Caco-2 (cell line): ENCODE measurements at regions of chr19 and their contacts with region 1.

Region 1: GRCh38 chr19:37906869-37907734 is at the start of gene SIPA1L3:
- DNase-seq: peak; percentile 99
- H3K4me3 ChIP-seq: peak within 1 kb of the TSS; percentile 77
- H3K4me3 Mint-ChIP-seq: peak within 1 kb of the TSS; percentile 84
- H3K27ac Mint-ChIP-seq: peak within 1 kb of the TSS; percentile 88
- H3K4me1 ChIP-seq: peaks cover 20% of the 10 kb centered on the region
- H3K4me1 Mint-ChIP-seq: peaks cover 23% of the 10 kb centered on the region
- H3K27me3 ChIP-seq: no peaks in the 10 kb centered on the region
- H3K27me3 Mint-ChIP-seq: no peaks in the 10 kb centered on the region
- CTCF ChIP-seq: no peak
- total RNA-seq, gene SIPA1L3: 125 and 129 TPM in 2 replicates

Region 2: DNA sequence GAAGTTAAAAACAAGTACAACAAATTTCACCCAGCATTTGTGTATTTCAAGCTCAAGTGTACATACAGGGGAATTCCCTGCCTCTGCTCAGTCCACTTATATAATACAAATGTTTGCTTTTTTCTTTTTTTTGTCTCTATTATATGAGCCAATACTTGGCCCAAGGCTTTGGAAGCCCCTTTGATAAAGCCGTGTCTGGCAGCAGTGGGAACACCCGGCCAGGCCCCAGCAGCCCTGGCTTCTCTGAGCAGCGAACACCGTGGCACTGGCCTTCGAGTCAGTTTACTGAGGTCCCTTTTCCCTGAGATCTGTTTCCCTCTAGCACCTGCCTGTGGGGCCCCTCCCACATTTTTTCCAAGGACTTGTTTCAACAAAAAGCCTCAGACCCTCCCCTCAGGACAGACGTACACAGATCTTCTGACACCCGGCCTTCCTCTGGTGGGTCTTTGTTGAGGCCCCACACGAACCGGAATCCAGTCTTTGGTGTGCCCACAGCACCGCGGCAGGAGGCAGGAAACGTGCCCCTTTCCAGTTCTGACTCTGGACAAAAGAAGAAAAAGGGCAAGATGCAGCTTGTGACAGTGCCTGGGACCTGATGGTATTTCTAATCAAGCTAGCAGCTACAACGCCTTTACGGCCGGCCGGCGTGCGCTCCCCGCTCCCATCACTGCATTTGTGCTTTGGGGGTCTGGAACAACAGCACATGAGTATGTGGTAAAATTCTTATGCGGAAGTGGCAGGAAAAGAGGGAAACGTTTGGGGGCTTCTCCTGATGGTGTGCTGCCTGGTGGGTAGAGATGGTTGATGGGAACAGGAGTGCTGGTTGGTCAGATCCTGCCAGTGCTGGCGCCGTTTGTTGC is 13.7 kb after region 1 on chr19:
- CTCF ChIA-PET with region 1: interaction called, 7 read pairs
- POLR2A ChIA-PET with region 1: interaction called, 10 read pairs
- intact Hi-C with region 1: loop called (anchors 1 kb)
- DNase-seq: peak; percentile 52 to 63
- H3K4me3 ChIP-seq: no peak overlapping the region
- H3K4me3 Mint-ChIP-seq: peak overlapping the region; percentile 13
- H3K27ac Mint-ChIP-seq: peak overlapping the region; percentile 93
- H3K4me1 ChIP-seq: peaks cover 11% of the 10 kb centered on the region
- H3K4me1 Mint-ChIP-seq: peaks cover 24% of the 10 kb centered on the region
- H3K27me3 ChIP-seq: no peaks in the 10 kb centered on the region
- H3K27me3 Mint-ChIP-seq: no peaks in the 10 kb centered on the region
- CTCF ChIP-seq: no peak

Region 3: GRCh38 chr19:37941782-37942515 is 34.8 kb after region 1 on chr19:
- CTCF ChIA-PET with region 1: interaction called, 10 read pairs
- POLR2A ChIA-PET with region 1: interaction called, 21 read pairs
- intact Hi-C with region 1: loop called (anchors 1 kb)
- DNase-seq: peak; percentile 91 to 94
- H3K4me3 ChIP-seq: no peak overlapping the region
- H3K4me3 Mint-ChIP-seq: peak overlapping the region; percentile 68
- H3K27ac Mint-ChIP-seq: peak overlapping the region; percentile 94
- H3K4me1 ChIP-seq: peaks cover 68% of the 10 kb centered on the region
- H3K4me1 Mint-ChIP-seq: peaks cover 51% of the 10 kb centered on the region
- H3K27me3 ChIP-seq: no peaks in the 10 kb centered on the region
- H3K27me3 Mint-ChIP-seq: no peaks in the 10 kb centered on the region
- CTCF ChIP-seq: no peak

Region 4: GRCh38 chr19:38072776-38073750 is 166.0 kb after region 1 on chr19:
- CTCF ChIA-PET with region 1: interaction called, 15 read pairs
- POLR2A ChIA-PET with region 1: no interaction called
- intact Hi-C with region 1: no loop called
- DNase-seq: no peak
- H3K4me3 ChIP-seq: no peak overlapping the region
- H3K4me3 Mint-ChIP-seq: no peak overlapping the region
- H3K27ac Mint-ChIP-seq: peak overlapping the region; percentile 69
- H3K4me1 ChIP-seq: no peaks in the 10 kb centered on the region
- H3K4me1 Mint-ChIP-seq: peaks cover 14% of the 10 kb centered on the region
- H3K27me3 ChIP-seq: no peaks in the 10 kb centered on the region
- H3K27me3 Mint-ChIP-seq: no peaks in the 10 kb centered on the region
- CTCF ChIP-seq: no peak

Region 5: GRCh38 chr19:38229585-38230073 is 322.5 kb after region 1 on chr19:
- CTCF ChIA-PET with region 1: interaction called, 5 read pairs
- POLR2A ChIA-PET with region 1: no interaction called
- intact Hi-C with region 1: loop called (anchors 1 kb)
- DNase-seq: peak; percentile 91 to 92
- H3K4me3 ChIP-seq: peak overlapping the region; percentile 37
- H3K4me3 Mint-ChIP-seq: peak overlapping the region; percentile 44
- H3K27ac Mint-ChIP-seq: no peak overlapping the region
- H3K4me1 ChIP-seq: peaks cover 12% of the 10 kb centered on the region; the same call in 1 of the 2 replicates
- H3K4me1 Mint-ChIP-seq: peaks cover 5% of the 10 kb centered on the region
- H3K27me3 ChIP-seq: no peaks in the 10 kb centered on the region
- H3K27me3 Mint-ChIP-seq: peaks cover 12% of the 10 kb centered on the region
- CTCF ChIP-seq: peak in 1 of 2 experiments; percentile 8